Naive thymus-derived CD4-positive, alpha-beta T cell (primary cell): ENCODE measurements at regions of chr18 and their contacts with region 1.

Region 1: GRCh38 chr18:56638271-56639093 is at the start of gene TXNL1:
- DNase-seq: peak; percentile 95 to 99 (median 97)
- ATAC-seq: peak; percentile 98
- H3K4me3 ChIP-seq: peak within 1 kb of the TSS; percentile 69
- H3K4me3 Mint-ChIP-seq: peak within 1 kb of the TSS; percentile 88 to 100 (median 98)
- H3K27ac ChIP-seq: peak within 1 kb of the TSS; percentile 91
- H3K27ac Mint-ChIP-seq: peak within 1 kb of the TSS; percentile 93 to 99 (median 97)
- H3K4me1 ChIP-seq: peaks cover 17 to 20% of the 10 kb centered on the region in 2 donors
- H3K4me1 Mint-ChIP-seq: peaks cover 36 to 57% (median 49%) of the 10 kb centered on the region in 7 donors
- H3K27me3 ChIP-seq: no peaks in the 10 kb centered on the region
- H3K27me3 Mint-ChIP-seq: no peaks in the 10 kb centered on the region
- total RNA-seq, gene TXNL1: 32.4 to 65.5 (median 42.8) TPM

Region 2: GRCh38 chr18:56062931-56063330 is 575.6 kb before region 1 on chr18:
- CTCF ChIA-PET with region 1: no interaction called
- POLR2A ChIA-PET with region 1: no interaction called
- intact Hi-C with region 1: no loop called
- DNase-seq: no peak
- ATAC-seq: no peak
- H3K4me3 ChIP-seq: no peak overlapping the region
- H3K4me3 Mint-ChIP-seq: no peak overlapping the region
- H3K27ac ChIP-seq: no peak overlapping the region
- H3K27ac Mint-ChIP-seq: no peak overlapping the region
- H3K4me1 ChIP-seq: no peaks in the 10 kb centered on the region
- H3K4me1 Mint-ChIP-seq: no peaks in the 10 kb centered on the region
- H3K27me3 ChIP-seq: no peaks in the 10 kb centered on the region
- H3K27me3 Mint-ChIP-seq: no peaks in the 10 kb centered on the region

Region 3: GRCh38 chr18:56650944-56651770 is 12.7 kb after region 1 on chr18 and contains the start of gene WDR7:
- CTCF ChIA-PET with region 1: interaction called, 6 read pairs
- POLR2A ChIA-PET with region 1: interaction called, 68 read pairs
- intact Hi-C with region 1: loop called (anchors 1 kb)
- DNase-seq: peak; percentile 76 to 97 (median 95)
- ATAC-seq: peak; percentile 93
- H3K4me3 ChIP-seq: peak within 1 kb of the TSS; percentile 94
- H3K4me3 Mint-ChIP-seq: peak within 1 kb of the TSS; percentile 90 to 97 (median 95)
- H3K27ac ChIP-seq: peak within 1 kb of the TSS; percentile 75
- H3K27ac Mint-ChIP-seq: peak within 1 kb of the TSS; percentile 90 to 98 (median 95)
- H3K4me1 ChIP-seq: peaks cover 19 to 27% of the 10 kb centered on the region in 2 donors
- H3K4me1 Mint-ChIP-seq: peaks cover 32 to 70% (median 56%) of the 10 kb centered on the region in 7 donors
- H3K27me3 ChIP-seq: no peaks in the 10 kb centered on the region
- H3K27me3 Mint-ChIP-seq: no peaks in the 10 kb centered on the region
- total RNA-seq, gene WDR7: 44.2 to 59.8 (median 51.6) TPM

Region 4: DNA sequence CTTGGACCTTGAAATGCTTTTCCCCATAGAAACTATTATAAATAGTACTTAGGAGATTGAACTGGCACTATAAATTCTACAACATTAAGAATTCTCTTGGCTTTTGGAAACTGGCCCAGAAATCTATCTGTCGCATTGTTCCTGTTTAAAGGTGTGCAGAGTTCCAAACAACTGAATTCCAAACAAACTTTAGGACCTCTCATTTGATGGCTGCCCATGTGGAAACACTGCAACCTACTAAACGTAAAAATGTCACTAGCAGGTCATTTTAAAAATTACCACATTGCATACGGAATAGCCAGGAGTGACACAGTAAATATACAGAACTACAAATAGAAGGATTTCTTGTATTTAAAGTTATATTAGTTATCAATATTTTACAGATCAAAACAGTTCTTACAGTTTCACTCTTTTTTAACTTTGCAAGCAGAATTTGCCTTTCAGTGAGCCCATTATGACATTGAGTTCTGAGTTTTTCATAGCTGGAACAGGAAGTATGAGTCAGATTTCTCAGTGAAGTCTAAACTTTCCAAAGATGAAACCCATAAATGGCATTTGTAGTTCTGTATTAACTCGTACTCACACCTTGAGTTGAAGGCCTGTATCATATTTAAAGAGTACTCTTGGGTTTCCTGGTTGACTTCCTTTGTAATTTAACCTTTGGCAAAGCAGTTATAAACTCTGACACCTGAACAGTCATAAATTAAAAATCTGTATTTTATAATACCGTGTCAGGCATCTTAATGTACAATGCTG is 366.1 kb after region 1 on chr18:
- CTCF ChIA-PET with region 1: no interaction called
- POLR2A ChIA-PET with region 1: no interaction called
- intact Hi-C with region 1: loop called in 1 of 2 experiments (anchors 10 kb)
- DNase-seq: no peak
- ATAC-seq: peak; percentile 67
- H3K4me3 ChIP-seq: no peak overlapping the region
- H3K4me3 Mint-ChIP-seq: peak overlapping the region in 2 of 10 donors; percentile 35 to 37
- H3K27ac ChIP-seq: no peak overlapping the region
- H3K27ac Mint-ChIP-seq: peak overlapping the region in 5 of 9 donors; percentile 41 to 74 (median 46)
- H3K4me1 ChIP-seq: peaks cover 0 to 11% of the 10 kb centered on the region in 2 donors
- H3K4me1 Mint-ChIP-seq: peaks cover 7 to 33% (median 25%) of the 10 kb centered on the region in 7 donors
- H3K27me3 ChIP-seq: no peaks in the 10 kb centered on the region
- H3K27me3 Mint-ChIP-seq: no peaks in the 10 kb centered on the region

Region 5: DNA sequence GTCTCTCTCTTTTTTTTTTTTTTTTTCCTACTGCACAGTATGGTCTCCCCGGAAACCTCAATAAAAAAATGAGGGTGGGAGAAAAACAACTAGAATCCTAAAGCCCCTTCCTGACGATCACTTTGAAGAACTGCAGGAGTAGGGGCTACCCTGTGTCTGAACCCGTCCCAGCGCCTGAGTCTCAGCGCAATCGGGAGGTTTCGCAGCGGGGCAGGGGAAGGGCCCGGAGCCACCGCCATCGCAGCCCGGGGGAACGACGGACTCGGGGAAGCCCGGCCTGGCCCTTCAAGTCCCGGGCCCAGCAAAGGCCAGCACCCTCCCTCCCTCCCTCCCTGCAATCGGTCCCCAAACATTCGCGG is 982.7 kb after region 1 on chr18:
- CTCF ChIA-PET with region 1: no interaction called
- POLR2A ChIA-PET with region 1: interaction called, 5 read pairs
- intact Hi-C with region 1: loop called (anchors 1 kb)
- DNase-seq: no peak
- ATAC-seq: peak; percentile 4
- H3K4me3 ChIP-seq: peak overlapping the region; percentile 84
- H3K4me3 Mint-ChIP-seq: peak overlapping the region; percentile 89 to 99 (median 96)
- H3K27ac ChIP-seq: peak overlapping the region; percentile 85
- H3K27ac Mint-ChIP-seq: peak overlapping the region; percentile 93 to 99 (median 98)
- H3K4me1 ChIP-seq: peaks cover 13 to 19% of the 10 kb centered on the region in 2 donors
- H3K4me1 Mint-ChIP-seq: peaks cover 9 to 44% (median 34%) of the 10 kb centered on the region in 7 donors
- H3K27me3 ChIP-seq: no peaks in the 10 kb centered on the region
- H3K27me3 Mint-ChIP-seq: no peaks in the 10 kb centered on the region

Region 6: DNA sequence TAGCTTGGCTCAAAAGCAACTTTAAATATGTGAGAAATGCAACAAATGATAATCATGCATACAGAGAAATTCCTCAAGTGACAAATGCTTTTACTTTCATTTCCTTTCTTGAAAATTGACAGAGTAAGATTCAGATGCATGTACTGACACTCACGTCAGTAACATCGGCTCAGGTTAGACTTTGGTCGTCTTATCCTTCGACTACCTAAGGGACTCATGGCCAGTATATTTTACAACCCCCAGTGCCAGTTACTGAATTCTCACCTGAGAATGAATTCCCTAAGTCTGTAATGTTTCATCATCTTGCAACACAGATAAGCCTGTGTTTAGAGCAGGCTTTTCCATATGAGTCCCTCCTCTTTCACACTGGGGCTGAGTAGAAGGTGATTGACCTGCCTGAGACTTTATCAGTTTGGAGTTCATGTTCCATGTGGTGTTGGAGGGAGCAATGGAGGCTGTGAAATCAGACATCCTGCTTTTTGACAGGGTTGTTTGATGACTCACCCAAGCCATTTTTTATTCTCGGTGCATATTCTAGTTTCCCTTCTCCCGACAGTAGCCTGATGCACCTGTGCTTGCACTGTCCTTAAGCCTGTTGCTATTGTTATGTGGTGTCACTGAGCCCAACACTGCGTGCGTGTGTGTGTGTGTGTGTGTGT is 1195.1 kb after region 1 on chr18:
- CTCF ChIA-PET with region 1: no interaction called
- POLR2A ChIA-PET with region 1: no interaction called
- intact Hi-C with region 1: loop called in 1 of 2 experiments (anchors 10 kb)
- DNase-seq: peak in 2 of 9 donors; percentile 2 to 26
- ATAC-seq: peak; percentile 38
- H3K4me3 ChIP-seq: peak overlapping the region; percentile 38
- H3K4me3 Mint-ChIP-seq: peak overlapping the region; percentile 21 to 83 (median 74)
- H3K27ac ChIP-seq: no peak overlapping the region
- H3K27ac Mint-ChIP-seq: peak overlapping the region in 7 of 9 donors; percentile 19 to 92 (median 60)
- H3K4me1 ChIP-seq: peaks cover 0 to 6% of the 10 kb centered on the region in 2 donors
- H3K4me1 Mint-ChIP-seq: peaks cover 16 to 37% (median 26%) of the 10 kb centered on the region in 7 donors
- H3K27me3 ChIP-seq: no peaks in the 10 kb centered on the region
- H3K27me3 Mint-ChIP-seq: peaks cover 0 to 28% (median 4%) of the 10 kb centered on the region in 5 donors